Caco-2 (cell line): ENCODE measurements at regions of chr16 and their contacts with region 1.

Region 1: GRCh38 chr16:82061861-82062525 is 26.9 kb downstream of the HSD17B2 start:
- DNase-seq: peak in 1 of 2 experiments; percentile 36
- H3K4me3 ChIP-seq: no peak overlapping the region
- H3K4me3 Mint-ChIP-seq: no peak overlapping the region
- H3K27ac Mint-ChIP-seq: no peak overlapping the region
- H3K4me1 ChIP-seq: peaks cover 28% of the 10 kb centered on the region
- H3K4me1 Mint-ChIP-seq: peaks cover 30% of the 10 kb centered on the region
- H3K27me3 ChIP-seq: no peaks in the 10 kb centered on the region; the same call in none of the 2 replicates
- H3K27me3 Mint-ChIP-seq: no peaks in the 10 kb centered on the region
- CTCF ChIP-seq: peak; percentile 49 to 53

Region 2: GRCh38 chr16:82050909-82051357 is 11.1 kb before region 1 on chr16:
- CTCF ChIA-PET with region 1: interaction called, 16 read pairs
- POLR2A ChIA-PET with region 1: interaction called, 3 read pairs
- intact Hi-C with region 1: loop called (anchors 1 kb)
- DNase-seq: peak in 1 of 2 experiments; percentile 67
- H3K4me3 ChIP-seq: no peak overlapping the region
- H3K4me3 Mint-ChIP-seq: peak overlapping the region; percentile 56
- H3K27ac Mint-ChIP-seq: peak overlapping the region; percentile 84
- H3K4me1 ChIP-seq: peaks cover 72% of the 10 kb centered on the region
- H3K4me1 Mint-ChIP-seq: peaks cover 68% of the 10 kb centered on the region
- H3K27me3 ChIP-seq: no peaks in the 10 kb centered on the region
- H3K27me3 Mint-ChIP-seq: no peaks in the 10 kb centered on the region
- CTCF ChIP-seq: no peak

Region 3: GRCh38 chr16:82152196-82153112 is 90.5 kb after region 1 on chr16:
- CTCF ChIA-PET with region 1: no interaction called
- POLR2A ChIA-PET with region 1: no interaction called
- intact Hi-C with region 1: loop called (anchors 5 kb)
- DNase-seq: peak; percentile 61 to 67
- H3K4me3 ChIP-seq: no peak overlapping the region
- H3K4me3 Mint-ChIP-seq: peak overlapping the region; percentile 8
- H3K27ac Mint-ChIP-seq: peak overlapping the region; percentile 65
- H3K4me1 ChIP-seq: peaks cover 13% of the 10 kb centered on the region
- H3K4me1 Mint-ChIP-seq: peaks cover 16% of the 10 kb centered on the region
- H3K27me3 ChIP-seq: no peaks in the 10 kb centered on the region
- H3K27me3 Mint-ChIP-seq: no peaks in the 10 kb centered on the region
- CTCF ChIP-seq: no peak

Region 4: DNA sequence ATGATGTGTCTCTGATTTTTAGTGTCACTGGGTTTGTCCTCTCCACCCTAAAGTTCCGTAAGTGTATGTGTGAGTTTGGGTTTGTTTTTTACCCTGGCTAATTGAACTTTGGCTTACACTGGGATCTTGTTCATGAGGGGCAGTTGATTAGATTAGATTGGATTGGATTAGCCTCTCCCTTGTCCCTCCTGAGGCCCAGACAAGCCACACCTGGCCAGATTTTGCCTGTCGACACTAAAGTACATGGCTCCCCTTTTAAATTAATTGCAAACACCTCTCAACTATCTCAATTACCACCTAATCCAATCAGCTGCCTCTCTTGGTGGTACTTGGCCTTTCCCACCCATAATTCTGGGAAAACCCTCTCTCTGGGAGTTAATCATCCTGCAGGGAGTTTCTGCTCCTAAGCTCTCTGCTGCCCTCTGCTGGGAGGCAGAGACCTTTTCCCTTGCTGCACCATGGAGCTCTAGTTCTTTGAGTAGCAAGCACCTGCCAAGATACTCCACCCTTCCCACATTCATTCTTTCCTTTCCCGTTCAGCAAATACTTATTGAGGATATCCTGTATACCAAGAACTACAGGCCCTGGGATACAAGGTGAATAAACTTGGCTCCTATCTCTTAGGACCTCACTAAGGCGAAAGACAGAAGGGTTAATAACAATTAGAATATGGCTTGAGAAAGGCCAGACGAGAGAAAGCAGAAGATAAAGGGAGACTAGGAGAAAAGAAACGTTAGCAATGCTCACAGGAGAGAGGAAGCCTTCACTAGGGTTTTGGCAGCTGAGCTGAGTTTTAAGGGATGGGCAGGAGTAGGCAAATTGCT is 168.0 kb after region 1 on chr16:
- CTCF ChIA-PET with region 1: interaction called, 11 read pairs
- POLR2A ChIA-PET with region 1: no interaction called
- intact Hi-C with region 1: no loop called
- DNase-seq: peak; percentile 77 to 84
- H3K4me3 ChIP-seq: no peak overlapping the region
- H3K4me3 Mint-ChIP-seq: no peak overlapping the region
- H3K27ac Mint-ChIP-seq: no peak overlapping the region
- H3K4me1 ChIP-seq: no peaks in the 10 kb centered on the region
- H3K4me1 Mint-ChIP-seq: no peaks in the 10 kb centered on the region
- H3K27me3 ChIP-seq: no peaks in the 10 kb centered on the region
- H3K27me3 Mint-ChIP-seq: peaks cover 9% of the 10 kb centered on the region
- CTCF ChIP-seq: peak; percentile 97 to 98